ENCODE measurements at regions of chr1 and their contacts with region 1.

Region 1: GRCh38 chr1:231757101-231757404 is 130.5 kb downstream of the DISC1 start:
- DNase-seq: no peak
- H3K4me3 ChIP-seq: no peak overlapping the region
- H3K4me3 Mint-ChIP-seq: no peak overlapping the region
- H3K27ac Mint-ChIP-seq: no peak overlapping the region
- H3K4me1 ChIP-seq: no peaks in the 10 kb centered on the region
- H3K4me1 Mint-ChIP-seq: no peaks in the 10 kb centered on the region
- H3K27me3 ChIP-seq: no peaks in the 10 kb centered on the region
- H3K27me3 Mint-ChIP-seq: no peaks in the 10 kb centered on the region
- CTCF ChIP-seq: no peak

Region 2: GRCh38 chr1:231626535-231626945 is 130.5 kb before region 1 on chr1 and contains the start of gene DISC1:
- CTCF ChIA-PET with region 1: no interaction called
- POLR2A ChIA-PET with region 1: no interaction called
- intact Hi-C with region 1: loop called (anchors 5 kb)
- DNase-seq: peak; percentile 93
- H3K4me3 ChIP-seq: peak within 1 kb of the TSS; percentile 68
- H3K4me3 Mint-ChIP-seq: peak within 1 kb of the TSS; percentile 82
- H3K27ac Mint-ChIP-seq: peak within 1 kb of the TSS; percentile 72
- H3K4me1 ChIP-seq: peaks cover 14% of the 10 kb centered on the region
- H3K4me1 Mint-ChIP-seq: no peaks in the 10 kb centered on the region
- H3K27me3 ChIP-seq: no peaks in the 10 kb centered on the region
- H3K27me3 Mint-ChIP-seq: no peaks in the 10 kb centered on the region
- CTCF ChIP-seq: no peak
- total RNA-seq, gene DISC1: 13.5 TPM in 2 replicates

Region 3: DNA sequence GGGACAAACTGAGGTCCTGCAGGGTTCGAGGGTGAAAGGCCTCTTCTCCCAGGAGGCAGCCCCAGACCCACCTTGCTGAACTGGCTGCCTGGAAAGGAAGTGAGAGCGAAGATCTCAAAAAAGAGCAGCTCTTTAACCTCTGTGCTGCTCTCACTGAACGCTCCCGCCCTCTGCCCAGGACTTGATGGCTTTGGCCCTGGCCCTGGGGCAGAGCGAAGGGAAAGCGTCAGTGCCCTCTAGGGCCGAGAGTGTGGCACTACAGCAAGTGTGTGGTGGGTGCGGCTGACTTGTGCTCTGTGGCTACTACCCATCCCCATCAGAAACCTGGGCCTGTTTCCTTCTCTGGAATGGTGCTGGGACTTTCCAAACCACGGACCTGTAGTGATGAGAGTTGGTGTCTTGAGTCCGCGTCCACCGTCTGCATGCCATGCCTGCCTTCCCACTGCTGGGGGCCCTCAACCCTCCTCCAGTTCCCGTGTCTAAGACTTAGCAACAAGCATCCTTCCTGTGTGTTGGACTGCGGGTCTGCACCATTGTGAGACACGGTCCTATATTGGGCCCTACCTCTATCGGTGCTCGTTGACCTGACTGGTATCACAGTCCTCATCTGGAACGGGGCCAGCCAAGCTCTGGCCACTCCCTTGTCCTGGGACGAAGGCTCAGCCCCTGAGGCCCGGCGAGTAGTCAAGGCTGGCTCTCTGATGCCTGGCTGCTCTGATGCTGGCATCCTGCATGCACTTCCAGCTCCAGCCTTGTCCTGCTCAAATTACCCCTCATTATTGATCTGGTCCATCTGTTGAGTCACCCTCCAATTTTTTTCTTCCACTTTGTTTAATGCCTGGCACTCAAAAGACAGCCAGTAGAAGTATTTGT is 49.8 kb after region 1 on chr1:
- CTCF ChIA-PET with region 1: interaction called, 14 read pairs
- POLR2A ChIA-PET with region 1: no interaction called
- intact Hi-C with region 1: loop called (anchors 1 kb)
- DNase-seq: peak; percentile 58 to 65
- H3K4me3 ChIP-seq: no peak overlapping the region
- H3K4me3 Mint-ChIP-seq: no peak overlapping the region
- H3K27ac Mint-ChIP-seq: no peak overlapping the region
- H3K4me1 ChIP-seq: no peaks in the 10 kb centered on the region
- H3K4me1 Mint-ChIP-seq: no peaks in the 10 kb centered on the region
- H3K27me3 ChIP-seq: no peaks in the 10 kb centered on the region
- H3K27me3 Mint-ChIP-seq: no peaks in the 10 kb centered on the region
- CTCF ChIP-seq: peak; percentile 51 to 77